ENCODE measurements at regions of chr17 and their contacts with region 1.

Region 1: GRCh38 chr17:27601069-27601975 is 29.7 kb upstream of the LGALS9 start:
- DNase-seq: peak; percentile 85
- ATAC-seq: peak; percentile 80
- H3K4me3 ChIP-seq: 0 out of 2 replicates have a peak overlapping the region, but pooled peaks have one; percentile 11
- H3K27ac ChIP-seq: peak overlapping the region; percentile 68
- H3K4me1 ChIP-seq: peaks cover 29% of the 10 kb centered on the region
- H3K27me3 ChIP-seq: no peaks in the 10 kb centered on the region
- CTCF ChIP-seq: peak; percentile 89

Region 2: GRCh38 chr17:27236717-27237315 is 364.5 kb before region 1 on chr17:
- CTCF ChIA-PET with region 1: interaction called, 6 read pairs
- POLR2A ChIA-PET with region 1: no interaction called
- intact Hi-C with region 1: loop called (anchors 2 kb)
- DNase-seq: peak; percentile 88
- ATAC-seq: peak; percentile 50
- H3K4me3 ChIP-seq: no peak overlapping the region
- H3K27ac ChIP-seq: no peak overlapping the region
- H3K4me1 ChIP-seq: peaks cover 26% of the 10 kb centered on the region
- H3K27me3 ChIP-seq: no peaks in the 10 kb centered on the region
- CTCF ChIP-seq: peak; percentile 82

Region 3: GRCh38 chr17:27353461-27354050 is 247.8 kb before region 1 on chr17:
- CTCF ChIA-PET with region 1: no interaction called
- POLR2A ChIA-PET with region 1: no interaction called
- intact Hi-C with region 1: loop called (anchors 1 kb)
- DNase-seq: peak; percentile 93
- ATAC-seq: peak; percentile 92
- H3K4me3 ChIP-seq: peak overlapping the region; percentile 67
- H3K27ac ChIP-seq: peak overlapping the region; percentile 81
- H3K4me1 ChIP-seq: peaks cover 17% of the 10 kb centered on the region
- H3K27me3 ChIP-seq: no peaks in the 10 kb centered on the region
- CTCF ChIP-seq: peak; percentile 72

Region 4: DNA sequence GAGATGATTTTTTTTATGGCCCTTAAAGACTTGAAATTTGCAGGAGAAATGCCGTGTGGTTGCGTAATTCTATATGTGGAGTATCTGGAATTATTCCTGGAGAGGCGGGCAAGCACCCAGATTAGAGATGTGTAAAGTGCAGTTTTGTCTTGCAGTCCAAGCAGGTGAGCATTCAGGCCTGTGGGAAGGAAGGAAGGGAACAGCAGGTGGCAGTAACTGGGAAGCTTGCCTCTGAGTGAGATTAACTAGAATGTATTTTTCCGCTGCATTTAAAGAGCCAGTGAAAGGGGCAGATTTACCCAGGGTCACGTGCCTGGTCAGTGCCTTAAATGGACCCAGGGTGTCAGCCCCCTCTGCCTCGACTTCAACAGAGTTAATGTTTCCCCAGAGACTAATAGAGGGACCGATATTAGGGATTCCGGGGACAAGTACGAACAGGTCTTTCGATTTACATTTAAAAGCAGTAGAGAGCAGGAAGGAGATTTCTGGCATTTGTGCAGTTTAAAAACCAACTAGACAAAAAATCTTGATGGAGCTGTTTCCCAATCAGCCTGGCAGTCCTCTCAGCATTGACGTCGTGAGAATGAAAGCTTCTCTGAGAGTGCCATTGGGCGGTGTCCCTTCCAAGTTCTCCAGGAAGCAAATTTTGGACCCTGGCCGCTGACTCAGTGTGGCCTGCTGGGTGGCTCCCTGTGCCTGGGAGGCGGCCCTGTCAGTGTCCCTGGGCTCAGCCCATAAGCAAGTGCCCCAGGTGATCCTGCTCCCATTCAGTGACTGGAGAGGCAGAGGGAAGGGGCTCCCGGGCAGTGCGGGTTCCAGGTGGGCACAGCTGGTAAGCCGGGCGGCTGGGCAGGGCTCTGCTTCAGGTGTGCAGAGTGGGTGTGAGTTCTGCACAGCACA is 106.9 kb before region 1 on chr17:
- CTCF ChIA-PET with region 1: interaction called, 11 read pairs
- POLR2A ChIA-PET with region 1: no interaction called
- intact Hi-C with region 1: loop called (anchors 1 kb)
- DNase-seq: peak; percentile 62
- ATAC-seq: peak; percentile 84
- H3K4me3 ChIP-seq: peak overlapping the region; percentile 59
- H3K27ac ChIP-seq: peak overlapping the region; percentile 62
- H3K4me1 ChIP-seq: peaks cover 18% of the 10 kb centered on the region
- H3K27me3 ChIP-seq: no peaks in the 10 kb centered on the region
- CTCF ChIP-seq: peak; percentile 67

Region 5: GRCh38 chr17:27651411-27652345 is 50.4 kb after region 1 on chr17:
- CTCF ChIA-PET with region 1: no interaction called
- POLR2A ChIA-PET with region 1: no interaction called
- intact Hi-C with region 1: loop called (anchors 2 kb)
- DNase-seq: peak; percentile 61
- ATAC-seq: peak; percentile 57; the same call in 1 of the 2 replicates
- H3K4me3 ChIP-seq: no peak overlapping the region
- H3K27ac ChIP-seq: no peak overlapping the region
- H3K4me1 ChIP-seq: no peaks in the 10 kb centered on the region
- H3K27me3 ChIP-seq: no peaks in the 10 kb centered on the region
- CTCF ChIP-seq: peak; percentile 63